PC-3 (cell line): ENCODE measurements at regions of chr10 and their contacts with region 1.

Region 1: DNA sequence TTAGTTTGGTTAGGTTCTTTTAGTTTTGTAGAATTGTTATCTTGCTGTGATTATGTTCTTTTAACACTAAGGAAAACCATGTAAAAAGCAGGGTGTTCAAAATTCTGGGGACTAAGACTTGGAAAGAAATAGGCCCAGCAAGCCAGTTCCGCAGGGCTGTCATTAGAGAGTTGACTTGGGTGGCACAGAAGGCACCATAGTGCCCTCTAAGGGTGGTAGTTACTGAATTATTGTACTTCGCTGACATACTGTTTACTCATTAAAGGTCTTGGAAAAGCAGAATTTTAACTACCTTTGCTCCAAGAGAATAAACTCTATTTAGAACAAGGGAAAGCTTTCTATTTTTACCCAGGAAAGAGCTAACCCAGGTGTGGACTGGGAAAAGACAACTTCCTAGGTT is 86.5 kb downstream of the OTUD1 start:
- DNase-seq: peak; percentile 56
- ATAC-seq: peak; percentile 70
- H3K4me3 ChIP-seq: no peak overlapping the region
- H3K27ac ChIP-seq: no peak overlapping the region
- H3K4me1 ChIP-seq: peaks cover 10% of the 10 kb centered on the region; the same call in 1 of the 2 replicates
- H3K27me3 ChIP-seq: no peaks in the 10 kb centered on the region
- CTCF ChIP-seq: peak; percentile 71

Region 2: DNA sequence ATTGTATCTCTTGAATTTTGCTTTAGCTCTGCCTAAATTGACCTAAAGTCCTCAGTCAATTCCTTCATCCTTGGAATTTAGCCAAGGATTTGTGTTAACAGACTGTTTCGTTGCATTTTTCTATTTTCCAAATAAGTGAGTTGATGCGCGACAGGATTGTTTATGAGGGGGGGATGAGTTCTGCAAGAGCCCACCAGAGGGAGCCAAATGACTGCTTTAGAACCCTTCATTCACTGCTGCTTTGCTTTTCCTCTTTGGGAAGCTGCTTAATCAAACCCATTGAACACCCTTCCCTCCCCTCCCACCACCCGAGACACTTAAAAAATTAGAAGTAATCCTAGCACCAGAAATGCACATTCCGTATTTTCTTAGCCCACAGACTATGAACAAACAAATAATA is 367.0 kb before region 1 on chr10:
- CTCF ChIA-PET with region 1: no interaction called
- POLR2A ChIA-PET with region 1: no interaction called
- intact Hi-C with region 1: loop called (anchors 2 kb)
- DNase-seq: peak; percentile 64
- ATAC-seq: peak; percentile 81
- H3K4me3 ChIP-seq: no peak overlapping the region
- H3K27ac ChIP-seq: no peak overlapping the region
- H3K4me1 ChIP-seq: 0 out of 2 replicates have a peak, but pooled peaks cover 3% of the 10 kb centered on the region
- H3K27me3 ChIP-seq: peaks cover 17% of the 10 kb centered on the region
- CTCF ChIP-seq: peak; percentile 83

Region 3: GRCh38 chr10:23314835-23315239 is 210.6 kb before region 1 on chr10:
- CTCF ChIA-PET with region 1: interaction called, 5 read pairs
- POLR2A ChIA-PET with region 1: no interaction called
- intact Hi-C with region 1: loop called (anchors 1 kb)
- DNase-seq: peak; percentile 88
- ATAC-seq: peak; percentile 78
- H3K4me3 ChIP-seq: no peak overlapping the region
- H3K27ac ChIP-seq: no peak overlapping the region
- H3K4me1 ChIP-seq: 0 out of 2 replicates have a peak, but pooled peaks cover 5% of the 10 kb centered on the region
- H3K27me3 ChIP-seq: no peaks in the 10 kb centered on the region
- CTCF ChIP-seq: peak; percentile 76

Region 4: GRCh38 chr10:23438550-23439441 is 86.6 kb before region 1 on chr10 and contains the start of gene OTUD1:
- CTCF ChIA-PET with region 1: no interaction called
- POLR2A ChIA-PET with region 1: no interaction called
- intact Hi-C with region 1: loop called (anchors 5 kb)
- DNase-seq: peak; percentile 90
- ATAC-seq: peak; percentile 79
- H3K4me3 ChIP-seq: peak within 1 kb of the TSS; percentile 79
- H3K27ac ChIP-seq: peak within 1 kb of the TSS; percentile 66
- H3K4me1 ChIP-seq: peaks cover 34% of the 10 kb centered on the region
- H3K27me3 ChIP-seq: no peaks in the 10 kb centered on the region
- CTCF ChIP-seq: no peak
- total RNA-seq, gene OTUD1: 6.0 and 9.2 TPM in 2 replicates

Region 5: GRCh38 chr10:23505792-23506465 is 19.5 kb before region 1 on chr10:
- CTCF ChIA-PET with region 1: no interaction called
- POLR2A ChIA-PET with region 1: no interaction called
- intact Hi-C with region 1: no loop called
- DNase-seq: no peak
- ATAC-seq: no peak
- H3K4me3 ChIP-seq: no peak overlapping the region
- H3K27ac ChIP-seq: no peak overlapping the region
- H3K4me1 ChIP-seq: no peaks in the 10 kb centered on the region
- H3K27me3 ChIP-seq: no peaks in the 10 kb centered on the region
- CTCF ChIP-seq: no peak

Region 6: DNA sequence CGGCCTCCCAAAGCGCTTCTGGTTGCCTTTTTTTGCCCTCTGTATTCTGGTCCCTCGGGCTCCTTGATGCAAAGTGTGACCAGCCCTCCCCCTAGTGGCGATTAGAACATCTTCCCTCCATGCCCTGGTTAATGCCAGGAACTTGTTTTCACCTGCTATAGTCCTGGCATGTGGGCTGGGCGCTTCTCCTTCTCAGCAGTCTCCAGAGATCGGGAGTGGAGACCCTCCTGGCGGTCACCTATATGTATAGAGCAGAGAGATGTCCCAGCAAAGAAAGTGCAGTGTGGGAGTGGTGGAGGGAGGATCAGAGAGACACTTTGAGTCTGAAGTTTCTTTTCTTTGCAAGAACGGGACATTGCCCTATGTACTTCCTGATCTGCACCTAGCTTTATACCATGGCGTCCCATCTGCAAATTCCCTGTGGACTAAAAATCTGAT is 177.6 kb after region 1 on chr10:
- CTCF ChIA-PET with region 1: no interaction called
- POLR2A ChIA-PET with region 1: no interaction called
- intact Hi-C with region 1: loop called (anchors 5 kb)
- DNase-seq: peak; percentile 68
- ATAC-seq: peak; percentile 99
- H3K4me3 ChIP-seq: peak overlapping the region; percentile 55; the same call in 1 of the 2 replicates
- H3K27ac ChIP-seq: no peak overlapping the region
- H3K4me1 ChIP-seq: no peaks in the 10 kb centered on the region
- H3K27me3 ChIP-seq: no peaks in the 10 kb centered on the region
- CTCF ChIP-seq: peak; percentile 73